CD4-positive, alpha-beta memory T cell (primary cell): ENCODE measurements at regions of chr11 and their contacts with region 1.

Region 1: DNA sequence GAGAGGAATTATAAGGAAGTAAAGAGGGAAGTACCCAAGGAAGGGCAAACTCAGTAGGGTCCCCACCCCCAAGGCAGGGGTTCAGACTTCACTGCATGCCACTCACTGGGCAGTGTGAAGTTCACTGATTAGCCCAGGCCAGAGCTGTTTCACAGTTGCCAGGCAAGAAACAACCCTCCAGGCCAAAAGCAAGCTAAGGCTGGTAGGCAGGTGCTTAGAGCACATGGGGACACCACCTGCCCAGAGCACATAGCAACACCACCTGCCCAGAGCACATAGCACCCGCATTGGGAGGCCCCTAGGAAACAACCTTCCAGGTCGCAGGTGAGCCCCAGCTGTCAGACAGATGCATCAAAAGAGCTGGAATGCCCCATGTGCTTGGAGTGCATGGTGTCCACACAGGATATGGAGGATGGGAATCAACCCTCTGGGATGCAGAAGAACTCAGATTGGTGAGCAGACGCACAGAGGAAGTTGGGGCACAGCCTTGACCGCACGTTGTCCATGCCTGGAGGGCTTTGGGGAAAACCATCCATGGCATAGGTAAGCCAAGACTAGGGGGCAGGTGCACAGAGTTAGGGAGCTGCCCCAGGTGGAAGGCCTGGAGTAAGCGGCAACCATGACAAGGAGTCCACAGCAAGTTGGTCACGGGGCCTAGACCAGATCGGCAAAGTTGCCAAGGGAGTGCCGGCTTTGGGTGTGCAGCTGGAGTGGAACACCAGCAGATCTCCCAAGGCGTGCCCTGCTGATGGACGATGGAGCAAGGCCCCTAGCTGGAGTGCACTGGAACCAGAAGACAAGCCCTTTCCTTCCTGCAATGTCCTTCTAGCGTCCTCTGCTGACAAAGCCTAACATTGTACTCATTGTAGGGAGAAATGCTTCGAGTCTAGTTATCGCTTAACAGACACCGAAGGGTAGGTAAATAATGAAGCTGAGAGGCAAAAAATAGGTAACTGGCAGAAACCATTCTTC is 7.8 kb upstream of the TMEM216 start:
- DNase-seq: no peak
- H3K4me3 ChIP-seq: no peak overlapping the region
- H3K4me3 Mint-ChIP-seq: no peak overlapping the region
- H3K27ac ChIP-seq: no peak overlapping the region
- H3K27ac Mint-ChIP-seq: peak overlapping the region in 1 of 7 donors; percentile 18
- H3K4me1 ChIP-seq: peaks cover 8% of the 10 kb centered on the region
- H3K4me1 Mint-ChIP-seq: peaks cover 3 to 9% (median 6%) of the 10 kb centered on the region in 4 donors
- H3K27me3 ChIP-seq: no peaks in the 10 kb centered on the region
- H3K27me3 Mint-ChIP-seq: no peaks in the 10 kb centered on the region

Region 2: DNA sequence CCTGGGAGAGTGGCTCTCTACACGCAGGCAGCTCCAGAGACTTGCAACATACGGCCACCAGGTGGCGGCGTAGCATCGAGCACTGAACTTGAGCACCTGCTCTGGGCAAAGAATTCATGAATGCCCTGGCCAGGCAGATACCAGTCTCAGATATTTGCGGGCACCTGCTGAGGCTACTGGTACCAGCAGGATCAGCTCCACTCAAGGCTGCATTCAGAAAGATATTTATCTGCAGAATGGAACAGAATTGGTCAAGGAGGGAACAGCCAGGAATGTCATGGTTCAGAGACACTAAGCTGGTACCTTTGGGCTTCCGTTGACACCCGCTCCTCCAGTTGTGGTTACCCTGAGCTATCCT is 553.4 kb before region 1 on chr11:
- CTCF ChIA-PET with region 1: interaction called, 18 read pairs
- POLR2A ChIA-PET with region 1: no interaction called
- intact Hi-C with region 1: loop called (anchors 1 kb)
- DNase-seq: peak; percentile 68 to 77 (median 73)
- H3K4me3 ChIP-seq: no peak overlapping the region
- H3K4me3 Mint-ChIP-seq: peak overlapping the region in 2 of 8 donors; percentile 63 to 78
- H3K27ac ChIP-seq: no peak overlapping the region
- H3K27ac Mint-ChIP-seq: peak overlapping the region in 2 of 7 donors; percentile 83 to 93
- H3K4me1 ChIP-seq: no peaks in the 10 kb centered on the region
- H3K4me1 Mint-ChIP-seq: peaks cover 0 to 3% (median 0%) of the 10 kb centered on the region in 4 donors
- H3K27me3 ChIP-seq: no peaks in the 10 kb centered on the region
- H3K27me3 Mint-ChIP-seq: peaks cover 3 to 8% of the 10 kb centered on the region in 2 donors

Region 3: GRCh38 chr11:61294717-61295595 is 89.6 kb before region 1 on chr11 and contains the start of gene VWCE:
- CTCF ChIA-PET with region 1: no interaction called
- POLR2A ChIA-PET with region 1: no interaction called
- intact Hi-C with region 1: no loop called
- DNase-seq: peak; percentile 44 to 58 (median 52)
- H3K4me3 ChIP-seq: peak within 1 kb of the TSS in 1 of 2 donors; percentile 45
- H3K4me3 Mint-ChIP-seq: peak within 1 kb of the TSS; percentile 67 to 84 (median 79)
- H3K27ac ChIP-seq: no peak within 1 kb of the TSS
- H3K27ac Mint-ChIP-seq: peak within 1 kb of the TSS in 1 of 7 donors; percentile 25
- H3K4me1 ChIP-seq: peaks cover 16% of the 10 kb centered on the region
- H3K4me1 Mint-ChIP-seq: peaks cover 21 to 39% (median 28%) of the 10 kb centered on the region in 4 donors
- H3K27me3 ChIP-seq: peaks cover 4% of the 10 kb centered on the region
- H3K27me3 Mint-ChIP-seq: peaks cover 11 to 12% of the 10 kb centered on the region in 2 donors
- total RNA-seq, gene VWCE: 0.38 to 0.44 TPM

Region 4: GRCh38 chr11:61325649-61326414 is 58.7 kb before region 1 on chr11:
- CTCF ChIA-PET with region 1: interaction called, 15 read pairs
- POLR2A ChIA-PET with region 1: interaction called, 4 read pairs
- intact Hi-C with region 1: no loop called
- DNase-seq: no peak
- H3K4me3 ChIP-seq: no peak overlapping the region
- H3K4me3 Mint-ChIP-seq: no peak overlapping the region
- H3K27ac ChIP-seq: no peak overlapping the region
- H3K27ac Mint-ChIP-seq: peak overlapping the region in 2 of 7 donors; percentile 4 to 7
- H3K4me1 ChIP-seq: peaks cover 3% of the 10 kb centered on the region
- H3K4me1 Mint-ChIP-seq: peaks cover 11 to 31% (median 17%) of the 10 kb centered on the region in 4 donors
- H3K27me3 ChIP-seq: no peaks in the 10 kb centered on the region
- H3K27me3 Mint-ChIP-seq: no peaks in the 10 kb centered on the region

Region 5: GRCh38 chr11:61353131-61354067 is 31.2 kb before region 1 on chr11:
- CTCF ChIA-PET with region 1: interaction called, 13 read pairs
- POLR2A ChIA-PET with region 1: no interaction called
- intact Hi-C with region 1: no loop called
- DNase-seq: no peak
- H3K4me3 ChIP-seq: no peak overlapping the region
- H3K4me3 Mint-ChIP-seq: peak overlapping the region in 1 of 8 donors; percentile 7
- H3K27ac ChIP-seq: no peak overlapping the region
- H3K27ac Mint-ChIP-seq: no peak overlapping the region
- H3K4me1 ChIP-seq: no peaks in the 10 kb centered on the region
- H3K4me1 Mint-ChIP-seq: peaks cover 5 to 8% (median 6%) of the 10 kb centered on the region in 4 donors
- H3K27me3 ChIP-seq: no peaks in the 10 kb centered on the region
- H3K27me3 Mint-ChIP-seq: no peaks in the 10 kb centered on the region

Region 6: DNA sequence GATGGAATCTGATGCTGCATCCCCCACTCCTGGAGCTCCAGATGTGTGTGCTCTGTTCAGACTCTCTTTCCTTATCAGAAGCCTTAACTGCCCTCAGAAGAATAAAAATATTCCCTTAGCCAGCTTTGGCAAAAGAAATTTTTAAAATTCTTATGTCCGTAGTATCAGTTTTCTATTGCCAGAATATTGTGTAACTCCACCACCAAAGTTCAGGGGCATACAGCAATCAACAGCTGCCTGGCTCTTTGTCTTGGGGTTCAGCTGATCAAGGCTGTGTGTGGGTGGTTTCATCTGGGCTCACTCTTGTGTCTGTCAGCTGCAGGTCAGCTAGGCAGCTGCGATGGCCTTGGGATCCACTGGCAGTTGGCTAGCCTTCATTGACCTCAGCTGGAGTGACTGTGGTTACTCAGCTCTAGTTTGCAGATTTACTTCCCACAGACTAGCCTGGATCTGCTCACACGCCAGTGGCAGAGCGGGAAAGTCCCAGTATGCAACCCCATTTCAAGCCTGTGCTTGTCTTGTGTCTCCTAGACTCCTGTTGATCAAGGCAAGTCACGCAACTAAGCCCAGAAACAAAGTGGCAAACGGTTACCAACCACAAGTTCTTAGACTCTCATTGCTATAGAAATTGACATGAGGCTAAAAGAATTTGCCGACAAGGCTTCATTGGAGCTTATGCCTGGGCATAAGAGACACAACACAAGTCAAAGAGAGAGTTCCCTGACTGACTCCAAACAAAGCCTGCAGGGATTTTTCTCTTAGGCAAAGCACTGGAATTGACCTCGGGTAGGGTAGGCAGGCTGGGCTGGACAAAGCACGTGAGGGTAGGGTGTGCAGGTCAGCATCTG is 15.0 kb before region 1 on chr11:
- CTCF ChIA-PET with region 1: interaction called, 37 read pairs
- POLR2A ChIA-PET with region 1: interaction called, 6 read pairs
- intact Hi-C with region 1: no loop called
- DNase-seq: no peak
- H3K4me3 ChIP-seq: no peak overlapping the region
- H3K4me3 Mint-ChIP-seq: no peak overlapping the region
- H3K27ac ChIP-seq: no peak overlapping the region
- H3K27ac Mint-ChIP-seq: peak overlapping the region in 2 of 7 donors; percentile 0 to 7
- H3K4me1 ChIP-seq: no peaks in the 10 kb centered on the region
- H3K4me1 Mint-ChIP-seq: no peaks in the 10 kb centered on the region
- H3K27me3 ChIP-seq: no peaks in the 10 kb centered on the region
- H3K27me3 Mint-ChIP-seq: no peaks in the 10 kb centered on the region

Region 7: GRCh38 chr11:61429691-61430582 is 45.4 kb after region 1 on chr11 and contains the starts of genes CPSF7 and SDHAF2:
- CTCF ChIA-PET with region 1: interaction called, 10 read pairs
- POLR2A ChIA-PET with region 1: interaction called, 4 read pairs
- intact Hi-C with region 1: no loop called
- DNase-seq: peak; percentile 96 to 98 (median 97)
- H3K4me3 ChIP-seq: peak within 1 kb of the TSS; percentile 89 to 94
- H3K4me3 Mint-ChIP-seq: peak within 1 kb of the TSS; percentile 94 to 99 (median 98)
- H3K27ac ChIP-seq: peak within 1 kb of the TSS; percentile 99
- H3K27ac Mint-ChIP-seq: peak within 1 kb of the TSS; percentile 99 to 100 (median 100)
- H3K4me1 ChIP-seq: peaks cover 75% of the 10 kb centered on the region
- H3K4me1 Mint-ChIP-seq: peaks cover 29 to 82% (median 61%) of the 10 kb centered on the region in 4 donors
- H3K27me3 ChIP-seq: no peaks in the 10 kb centered on the region
- H3K27me3 Mint-ChIP-seq: no peaks in the 10 kb centered on the region
- total RNA-seq, gene CPSF7: 145 to 149 TPM
- total RNA-seq, gene SDHAF2: 54.7 to 60.2 TPM